ENCODE measurements at regions of chr7 and their contacts with region 1.

Region 1: DNA sequence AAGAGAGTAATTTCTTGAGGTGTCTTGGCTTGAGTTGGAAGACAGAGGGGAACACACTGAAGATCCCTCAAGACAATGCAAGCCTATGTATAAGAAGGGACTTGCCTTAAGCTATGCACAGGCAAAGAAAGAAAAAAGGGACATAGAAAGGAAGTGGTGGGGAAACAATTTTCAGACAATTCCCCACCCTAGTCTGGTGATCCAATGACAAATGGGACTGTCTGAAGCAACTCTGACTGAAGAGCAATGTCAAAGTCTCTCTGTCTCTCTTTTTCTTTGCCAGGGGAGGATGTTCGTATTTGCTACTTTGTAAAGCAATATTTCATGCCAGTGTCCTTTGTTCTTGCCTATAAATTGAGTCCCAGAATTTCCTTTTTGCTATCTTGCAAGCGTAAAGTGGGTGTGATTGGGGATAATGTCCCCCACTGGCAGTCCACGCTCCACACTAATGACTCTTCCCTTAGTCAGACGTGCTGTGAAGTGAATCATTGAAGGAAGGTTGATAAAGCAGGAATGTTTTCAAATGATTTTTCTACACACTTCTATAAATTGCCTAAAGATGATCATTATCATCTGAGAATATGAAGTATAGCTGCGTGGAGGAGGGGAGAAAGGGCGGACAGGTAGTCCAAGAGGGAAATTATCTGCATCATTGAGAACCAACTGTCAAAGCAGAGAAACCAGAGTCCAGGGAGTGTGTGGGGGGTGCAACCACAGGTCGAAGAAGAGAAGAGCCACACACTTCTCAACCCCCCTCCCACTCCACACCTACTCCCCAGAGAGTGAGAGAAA is 243.8 kb upstream of the ETV1 start:
- DNase-seq: peak; percentile 41
- H3K4me3 Mint-ChIP-seq: peak overlapping the region; percentile 14
- H3K27ac Mint-ChIP-seq: peak overlapping the region; percentile 46
- H3K4me1 Mint-ChIP-seq: peaks cover 41% of the 10 kb centered on the region
- H3K27me3 Mint-ChIP-seq: no peaks in the 10 kb centered on the region
- CTCF ChIP-seq: no peak

Region 2: DNA sequence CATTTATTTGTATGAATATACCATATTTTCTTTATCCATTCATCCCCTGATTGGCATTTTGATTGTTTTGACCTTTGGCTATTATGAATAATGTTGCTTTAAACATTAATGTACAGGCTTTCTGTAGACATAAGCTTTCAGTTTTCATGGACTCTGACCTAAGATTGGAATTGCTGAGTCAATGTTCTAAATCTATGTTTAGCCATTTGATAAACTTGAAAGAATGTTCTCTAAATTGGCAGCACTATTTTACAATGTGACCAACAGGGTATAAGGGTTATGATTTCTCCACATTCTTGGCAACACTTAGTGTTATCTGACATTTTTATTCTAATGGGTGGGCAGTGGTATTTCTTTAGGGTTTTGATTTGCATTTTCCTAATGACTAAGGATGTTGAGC is 14.1 kb before region 1 on chr7:
- CTCF ChIA-PET with region 1: interaction called, 5 read pairs
- intact Hi-C with region 1: loop called (anchors 2 kb)
- DNase-seq: no peak
- H3K4me3 Mint-ChIP-seq: no peak overlapping the region
- H3K27ac Mint-ChIP-seq: peak overlapping the region; percentile 55
- H3K4me1 Mint-ChIP-seq: peaks cover 26% of the 10 kb centered on the region
- H3K27me3 Mint-ChIP-seq: no peaks in the 10 kb centered on the region
- CTCF ChIP-seq: no peak

Region 3: DNA sequence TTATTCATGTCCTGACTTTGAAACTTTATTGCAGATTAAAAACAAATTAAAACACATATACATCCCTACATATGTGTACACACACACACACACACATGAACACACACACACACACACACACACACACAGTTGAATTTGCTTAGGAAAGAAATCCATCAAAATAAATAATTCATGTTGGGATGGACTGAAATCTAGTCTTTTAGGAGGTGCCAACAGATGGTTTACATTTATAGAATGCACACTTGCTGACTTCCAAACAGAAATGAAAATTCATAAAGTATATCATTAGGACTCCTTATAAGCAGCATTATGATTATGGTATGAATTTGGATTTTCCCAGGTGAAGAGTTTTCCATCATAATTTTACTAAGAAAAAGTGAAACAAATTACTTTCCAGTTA is 26.7 kb after region 1 on chr7:
- CTCF ChIA-PET with region 1: no interaction called
- intact Hi-C with region 1: no loop called
- DNase-seq: no peak
- H3K4me3 Mint-ChIP-seq: no peak overlapping the region
- H3K27ac Mint-ChIP-seq: no peak overlapping the region
- H3K4me1 Mint-ChIP-seq: no peaks in the 10 kb centered on the region
- H3K27me3 Mint-ChIP-seq: no peaks in the 10 kb centered on the region
- CTCF ChIP-seq: no peak

Measured in Calu3 (cell line).